ENCODE measurements at regions of chr1 and their contacts with region 1.

Region 1: GRCh38 chr1:113871597-113872113 is at the start of gene PTPN22:
- DNase-seq: peak; percentile 81
- H3K4me3 Mint-ChIP-seq: peak within 1 kb of the TSS; percentile 86
- H3K27ac Mint-ChIP-seq: peak within 1 kb of the TSS; percentile 97
- H3K4me1 Mint-ChIP-seq: peaks cover 65% of the 10 kb centered on the region
- H3K27me3 Mint-ChIP-seq: no peaks in the 10 kb centered on the region
- total RNA-seq, gene PTPN22: 57.8 and 58.8 TPM in 2 replicates

Region 2: DNA sequence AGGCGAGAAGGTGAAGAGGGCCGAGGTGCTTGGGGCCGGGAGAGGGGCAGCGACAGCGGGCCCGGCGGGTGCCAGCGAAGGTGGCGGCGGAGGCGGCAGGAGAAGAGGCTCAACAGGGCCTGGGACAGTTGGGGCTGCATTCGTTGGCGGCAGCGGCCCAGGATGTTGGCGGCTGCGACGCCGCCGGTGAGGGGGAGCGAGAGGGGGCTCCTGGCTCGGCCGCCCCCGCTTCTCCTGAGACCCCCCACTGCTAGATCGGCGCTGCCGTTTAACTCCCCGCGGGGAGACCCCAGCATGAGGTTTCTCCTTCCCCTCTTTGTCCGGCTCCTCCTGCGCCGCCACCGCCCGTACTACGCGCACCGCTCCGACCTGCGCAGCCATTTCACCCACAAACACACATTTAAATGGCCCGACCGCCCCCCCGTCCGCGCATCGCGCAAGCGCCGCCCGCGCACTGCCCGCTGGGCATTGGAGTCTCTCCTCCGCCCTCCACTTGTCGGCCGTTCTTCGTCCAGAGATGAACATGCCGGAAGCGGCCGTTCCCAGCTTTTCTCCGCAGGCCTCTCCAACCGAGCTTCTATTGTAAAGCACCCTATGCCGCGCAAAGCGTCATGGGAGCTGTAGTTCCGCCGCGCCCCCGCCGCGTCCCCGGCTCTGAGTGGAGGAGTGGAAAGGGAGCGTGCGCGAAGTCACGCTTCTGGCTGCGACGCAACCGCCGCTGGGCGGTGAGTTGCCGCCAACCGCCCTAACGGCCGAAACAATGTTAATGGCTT is 59.6 kb before region 1 on chr1 and contains the start of gene RSBN1:
- intact Hi-C with region 1: loop called (anchors 1 kb)
- DNase-seq: peak; percentile 99
- H3K4me3 Mint-ChIP-seq: peak within 1 kb of the TSS; percentile 97
- H3K27ac Mint-ChIP-seq: peak within 1 kb of the TSS; percentile 95
- H3K4me1 Mint-ChIP-seq: peaks cover 27% of the 10 kb centered on the region
- H3K27me3 Mint-ChIP-seq: no peaks in the 10 kb centered on the region
- total RNA-seq, gene RSBN1: 21.5 and 23.4 TPM in 2 replicates

Region 3: DNA sequence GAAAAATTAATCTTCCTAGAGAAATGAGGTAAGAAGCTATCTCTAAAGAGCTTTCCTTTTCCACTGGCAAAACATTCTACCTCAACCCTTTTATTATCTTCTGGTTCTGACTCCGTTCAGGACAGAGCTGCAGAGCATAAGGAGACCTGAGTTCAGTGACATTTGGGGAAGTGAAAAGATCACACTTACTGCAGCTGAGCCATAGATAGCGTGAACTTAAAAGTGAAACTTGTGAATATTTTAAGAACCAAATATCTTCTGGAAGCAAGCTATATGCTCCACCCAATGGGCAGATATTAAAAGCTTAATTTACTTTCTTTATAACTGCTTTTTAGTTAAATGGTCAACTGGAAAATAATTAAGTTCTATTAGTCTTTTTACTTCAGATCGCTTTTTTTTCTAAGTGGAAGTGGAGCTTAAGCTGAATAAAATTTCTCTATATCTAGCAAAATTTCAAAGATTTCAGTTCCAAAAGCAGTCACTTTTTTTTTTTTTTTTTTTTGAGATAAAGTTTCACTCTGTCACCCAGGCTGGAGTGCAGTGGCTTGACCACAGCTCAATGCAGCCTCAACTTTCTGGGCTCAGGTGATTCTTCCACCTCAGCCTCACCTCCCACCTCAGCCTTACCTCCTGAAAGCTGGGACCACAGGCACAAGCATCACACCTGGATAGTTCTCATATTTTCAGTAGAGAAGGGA is 12.0 kb before region 1 on chr1:
- intact Hi-C with region 1: loop called (anchors 1 kb)
- DNase-seq: no peak
- H3K4me3 Mint-ChIP-seq: peak overlapping the region; percentile 30
- H3K27ac Mint-ChIP-seq: peak overlapping the region; percentile 59
- H3K4me1 Mint-ChIP-seq: peaks cover 40% of the 10 kb centered on the region
- H3K27me3 Mint-ChIP-seq: no peaks in the 10 kb centered on the region

Region 4: GRCh38 chr1:113904674-113905434 is 33.2 kb after region 1 on chr1 and contains the starts of genes AP4B1 and DCLRE1B:
- intact Hi-C with region 1: loop called (anchors 1 kb)
- DNase-seq: peak; percentile 99
- H3K4me3 Mint-ChIP-seq: peak within 1 kb of the TSS; percentile 99
- H3K27ac Mint-ChIP-seq: peak within 1 kb of the TSS; percentile 97
- H3K4me1 Mint-ChIP-seq: peaks cover 59% of the 10 kb centered on the region
- H3K27me3 Mint-ChIP-seq: no peaks in the 10 kb centered on the region
- total RNA-seq, gene AP4B1: 42.0 and 45.9 TPM in 2 replicates
- total RNA-seq, gene DCLRE1B: 18.8 and 20.8 TPM in 2 replicates

Measured in activated T-helper 2 cell treated with anti-CD3 and anti-CD28 coated beads, Interferon-gamma antibody, Interleukin-2, Interleukin-4, amounts not matched to agents 10 μg/mL and 5 μg/mL and 100 μg/mL, durations not matched to agents 14 hours and 24 hours and 36 hours (primary cell).